Vagina (tissue), 2 donors: ENCODE measurements at regions of chr1 and their contacts with region 1.

Region 1: DNA sequence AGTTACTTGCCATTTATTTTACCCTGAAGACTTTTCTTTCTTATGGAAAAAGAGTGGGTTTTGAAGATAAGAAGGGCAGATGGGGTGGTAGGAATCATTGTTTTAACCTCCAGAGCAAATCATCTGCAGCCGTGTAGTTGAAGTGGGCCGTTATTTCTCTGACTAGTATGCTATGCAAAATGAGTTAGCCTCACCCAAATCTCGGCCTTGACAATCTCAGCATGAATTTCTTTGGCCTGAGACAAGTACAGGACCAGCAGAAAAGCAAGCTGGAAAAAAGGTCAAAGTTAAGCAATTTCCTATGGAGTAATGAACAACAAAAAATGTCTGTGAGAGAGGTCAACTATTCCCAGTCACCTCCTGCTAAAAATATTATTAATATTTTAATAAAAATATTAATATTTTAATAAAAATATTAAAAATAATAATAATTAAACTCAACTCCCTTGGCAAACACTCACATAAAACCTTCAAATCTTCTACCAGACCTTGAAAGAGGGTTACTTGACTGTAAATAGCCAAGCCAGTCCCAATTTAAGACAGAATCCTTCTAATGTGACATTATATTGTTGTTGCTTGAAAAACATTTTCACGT is 6.8 kb upstream of the TEKT2 start:
- DNase-seq: no peak
- H3K4me3 ChIP-seq: no peak overlapping the region
- H3K27ac ChIP-seq: no peak overlapping the region
- H3K4me1 ChIP-seq: no peaks in the 10 kb centered on the region
- H3K27me3 ChIP-seq: no peaks in the 10 kb centered on the region
- CTCF ChIP-seq: no peak
- POLR2A ChIP-seq: no peak

Region 2: GRCh38 chr1:35573198-35574090 is 503.6 kb before region 1 on chr1 and contains the start of gene TFAP2E:
- intact Hi-C with region 1: loop called (anchors 5 kb)
- DNase-seq: no peak
- H3K4me3 ChIP-seq: peak within 1 kb of the TSS; percentile 40 to 46
- H3K27ac ChIP-seq: no peak within 1 kb of the TSS
- H3K4me1 ChIP-seq: peaks cover 28% of the 10 kb centered on the region
- H3K27me3 ChIP-seq: no peaks in the 10 kb centered on the region
- CTCF ChIP-seq: no peak
- POLR2A ChIP-seq: no peak
- total RNA-seq, gene TFAP2E: 6.4 TPM

Region 3: DNA sequence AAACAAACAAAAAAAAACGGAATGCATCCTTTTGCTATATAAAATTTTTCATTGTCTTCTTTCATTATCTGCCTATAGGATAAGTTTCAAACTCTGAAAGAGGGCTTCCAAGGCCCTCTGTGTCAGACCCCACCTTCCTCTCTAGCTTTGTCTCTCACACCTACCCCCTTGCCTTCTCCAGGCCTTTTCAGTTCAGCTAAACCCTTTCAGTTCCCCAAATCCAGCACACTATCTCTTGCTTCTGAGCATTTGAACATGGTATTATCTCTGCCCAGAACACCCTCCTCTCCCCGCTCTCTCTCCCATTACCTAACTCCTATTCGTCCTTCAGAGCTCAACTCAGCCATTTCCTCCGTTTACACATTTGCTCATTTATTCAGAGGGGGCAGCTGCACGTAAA is 394.1 kb before region 1 on chr1:
- intact Hi-C with region 1: no loop called
- DNase-seq: no peak
- H3K4me3 ChIP-seq: no peak overlapping the region
- H3K27ac ChIP-seq: no peak overlapping the region
- H3K4me1 ChIP-seq: no peaks in the 10 kb centered on the region
- H3K27me3 ChIP-seq: no peaks in the 10 kb centered on the region
- CTCF ChIP-seq: no peak
- POLR2A ChIP-seq: no peak